Calu3 (cell line): ENCODE measurements at regions of chr1 and their contacts with region 1.

Region 1: DNA sequence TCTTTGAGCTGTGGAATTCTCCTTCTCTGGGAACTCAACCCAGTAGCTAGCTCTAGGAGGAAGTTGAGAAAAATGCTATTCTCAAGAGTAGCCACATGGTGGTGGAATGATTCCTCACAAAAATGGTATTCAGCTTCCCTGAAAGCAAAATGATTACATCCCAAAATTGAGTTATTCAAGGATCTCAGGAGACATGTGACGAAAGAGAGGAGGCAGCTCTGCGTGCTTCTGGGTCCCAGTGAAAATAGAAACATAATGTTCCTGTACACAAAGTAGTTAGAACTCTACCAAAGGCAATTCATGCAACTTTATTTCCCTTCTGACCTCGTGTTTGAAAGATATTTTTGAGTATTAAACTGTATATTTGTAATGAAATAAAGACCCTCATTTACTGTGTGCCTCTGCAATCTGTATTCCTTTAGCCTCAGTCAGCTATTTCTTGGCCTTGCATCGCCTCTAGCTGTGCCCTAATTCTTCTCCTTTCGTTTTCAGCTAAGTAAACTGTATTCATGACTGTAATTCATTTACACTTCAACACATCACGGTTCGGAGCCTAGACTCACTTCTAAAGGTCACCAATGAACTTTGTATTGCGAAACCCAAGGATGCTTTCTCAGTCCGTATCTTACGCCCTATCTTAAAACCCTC is 167.3 kb downstream of the FASLG start:
- DNase-seq: peak; percentile 41
- H3K4me3 Mint-ChIP-seq: no peak overlapping the region
- H3K27ac Mint-ChIP-seq: no peak overlapping the region
- H3K4me1 Mint-ChIP-seq: peaks cover 6% of the 10 kb centered on the region
- H3K27me3 Mint-ChIP-seq: no peaks in the 10 kb centered on the region
- CTCF ChIP-seq: peak; percentile 65

Region 2: DNA sequence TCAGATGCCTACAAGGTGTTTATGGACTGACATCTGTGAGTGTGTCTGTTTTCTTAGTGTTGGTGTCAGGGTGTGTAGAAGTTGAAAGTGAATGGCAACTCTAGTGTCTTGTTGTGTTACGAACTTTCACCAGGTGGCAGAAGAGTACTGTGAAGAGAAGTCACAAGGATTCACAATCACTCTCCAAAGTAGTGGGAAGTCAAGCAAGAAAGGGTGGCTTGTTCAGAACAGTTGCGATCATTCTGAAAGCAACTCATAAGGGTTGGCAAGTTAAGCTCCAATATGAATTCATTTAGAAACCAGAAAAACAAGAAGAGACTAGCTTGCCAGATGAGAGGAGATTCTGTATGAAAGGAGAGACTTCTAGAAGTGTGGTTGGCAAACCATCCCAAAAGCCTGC is 81.2 kb before region 1 on chr1:
- CTCF ChIA-PET with region 1: interaction called, 18 read pairs
- intact Hi-C with region 1: loop called (anchors 1 kb)
- DNase-seq: peak; percentile 64
- H3K4me3 Mint-ChIP-seq: peak overlapping the region; percentile 17
- H3K27ac Mint-ChIP-seq: peak overlapping the region; percentile 80
- H3K4me1 Mint-ChIP-seq: peaks cover 33% of the 10 kb centered on the region
- H3K27me3 Mint-ChIP-seq: no peaks in the 10 kb centered on the region
- CTCF ChIP-seq: peak; percentile 66

Region 3: DNA sequence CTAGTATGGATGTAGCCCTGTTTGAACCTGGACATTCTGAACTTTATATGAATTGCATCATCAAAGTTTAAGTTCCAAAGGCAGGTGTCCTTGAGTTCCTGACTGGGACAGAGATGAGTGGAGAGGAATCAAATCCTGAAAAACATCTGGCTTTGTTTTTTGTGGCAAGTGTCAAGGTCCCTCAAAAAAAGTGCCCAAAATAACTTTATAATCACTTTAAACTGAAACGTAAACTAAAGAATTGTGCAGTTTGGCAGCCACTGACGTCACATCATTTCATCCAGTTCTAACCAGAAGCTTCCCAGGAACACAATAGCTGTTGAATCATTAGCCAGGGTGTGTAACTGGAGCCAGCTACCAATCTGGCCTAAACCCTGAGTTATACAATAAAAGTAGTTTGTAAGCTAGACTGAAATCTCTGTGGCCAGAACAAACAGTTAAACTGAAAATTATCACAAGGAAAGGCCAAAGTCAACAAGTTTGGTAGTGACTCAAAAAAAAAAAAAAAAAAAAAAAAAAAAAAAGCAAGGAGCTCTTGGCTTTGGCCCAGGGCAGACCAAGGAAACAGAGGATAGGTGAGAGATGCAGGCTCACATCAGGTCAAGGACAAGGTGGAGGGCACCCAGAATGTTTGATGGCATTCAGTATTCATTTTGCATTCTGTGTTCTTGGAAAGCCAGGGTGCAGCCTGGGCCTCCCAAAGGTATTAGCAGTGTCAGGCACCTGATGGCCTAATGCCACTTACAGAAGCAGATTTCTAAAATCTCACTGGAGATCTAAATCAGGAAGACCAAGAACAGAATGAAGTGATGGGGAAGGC is 150.2 kb after region 1 on chr1:
- CTCF ChIA-PET with region 1: interaction called, 4 read pairs
- intact Hi-C with region 1: loop called (anchors 2 kb)
- DNase-seq: peak; percentile 71
- H3K4me3 Mint-ChIP-seq: no peak overlapping the region
- H3K27ac Mint-ChIP-seq: peak overlapping the region; percentile 72
- H3K4me1 Mint-ChIP-seq: peaks cover 53% of the 10 kb centered on the region
- H3K27me3 Mint-ChIP-seq: no peaks in the 10 kb centered on the region
- CTCF ChIP-seq: no peak

Region 4: GRCh38 chr1:173122958-173123852 is 297.0 kb after region 1 on chr1:
- CTCF ChIA-PET with region 1: interaction called, 3 read pairs
- intact Hi-C with region 1: loop called (anchors 10 kb)
- DNase-seq: peak; percentile 55
- H3K4me3 Mint-ChIP-seq: peak overlapping the region; percentile 65
- H3K27ac Mint-ChIP-seq: peak overlapping the region; percentile 88
- H3K4me1 Mint-ChIP-seq: peaks cover 50% of the 10 kb centered on the region
- H3K27me3 Mint-ChIP-seq: no peaks in the 10 kb centered on the region
- CTCF ChIP-seq: no peak

Region 5: DNA sequence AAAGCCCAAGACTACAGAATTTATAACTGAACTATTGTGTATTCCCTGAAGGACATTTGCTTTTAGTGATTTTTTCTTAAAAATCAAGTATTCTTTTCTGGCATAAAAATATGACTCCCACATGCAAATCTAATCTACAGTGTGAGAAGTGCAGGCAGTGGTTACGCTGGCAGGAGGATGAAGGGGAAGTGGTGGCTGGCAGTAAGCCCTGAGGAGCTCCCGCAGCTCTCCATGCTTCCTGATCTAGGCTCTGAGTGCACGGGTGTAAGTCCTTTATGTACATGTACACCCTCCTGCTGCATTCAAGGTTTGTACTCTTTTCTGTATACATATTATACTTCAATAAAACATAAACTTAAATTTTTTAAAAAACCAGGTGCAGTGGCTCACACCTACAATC is 583.4 kb after region 1 on chr1:
- CTCF ChIA-PET with region 1: no interaction called
- intact Hi-C with region 1: loop called (anchors 5 kb)
- DNase-seq: no peak
- H3K4me3 Mint-ChIP-seq: no peak overlapping the region
- H3K27ac Mint-ChIP-seq: no peak overlapping the region
- H3K4me1 Mint-ChIP-seq: peaks cover 24% of the 10 kb centered on the region
- H3K27me3 Mint-ChIP-seq: no peaks in the 10 kb centered on the region
- CTCF ChIP-seq: no peak